A673 (cell line): ENCODE measurements at regions of chr6 and their contacts with region 1.

Region 1: GRCh38 chr6:108665495-108666196 is 104.9 kb downstream of the FOXO3 start:
- DNase-seq: no peak
- H3K4me3 ChIP-seq: no peak overlapping the region
- H3K27ac ChIP-seq: no peak overlapping the region
- H3K4me1 ChIP-seq: no peaks in the 10 kb centered on the region
- H3K27me3 ChIP-seq: no peaks in the 10 kb centered on the region
- CTCF ChIP-seq: no peak

Region 2: DNA sequence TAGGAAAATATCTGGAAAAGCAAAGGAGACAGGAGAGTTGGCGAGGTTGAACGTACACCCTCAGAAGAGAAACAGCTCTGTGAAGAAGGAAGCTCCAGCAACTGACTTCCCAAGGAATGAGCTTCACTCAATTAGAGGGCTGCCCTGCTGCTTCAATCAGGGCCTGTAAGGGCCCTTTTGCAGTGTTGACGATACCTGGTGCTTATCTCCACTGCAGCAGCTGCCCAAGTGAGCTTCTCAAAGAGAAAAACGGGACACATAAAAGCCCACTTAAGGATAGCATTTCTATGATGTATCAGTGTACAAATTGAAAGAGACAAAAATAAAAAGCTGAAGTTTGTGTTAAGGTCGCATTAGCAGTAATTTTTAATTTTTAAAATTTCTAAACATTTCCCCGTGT is 724.0 kb before region 1 on chr6:
- CTCF ChIA-PET with region 1: no interaction called
- POLR2A ChIA-PET with region 1: no interaction called
- intact Hi-C with region 1: no loop called
- DNase-seq: no peak
- H3K4me3 ChIP-seq: no peak overlapping the region
- H3K27ac ChIP-seq: no peak overlapping the region
- H3K4me1 ChIP-seq: no peaks in the 10 kb centered on the region
- H3K27me3 ChIP-seq: no peaks in the 10 kb centered on the region
- CTCF ChIP-seq: no peak

Region 3: DNA sequence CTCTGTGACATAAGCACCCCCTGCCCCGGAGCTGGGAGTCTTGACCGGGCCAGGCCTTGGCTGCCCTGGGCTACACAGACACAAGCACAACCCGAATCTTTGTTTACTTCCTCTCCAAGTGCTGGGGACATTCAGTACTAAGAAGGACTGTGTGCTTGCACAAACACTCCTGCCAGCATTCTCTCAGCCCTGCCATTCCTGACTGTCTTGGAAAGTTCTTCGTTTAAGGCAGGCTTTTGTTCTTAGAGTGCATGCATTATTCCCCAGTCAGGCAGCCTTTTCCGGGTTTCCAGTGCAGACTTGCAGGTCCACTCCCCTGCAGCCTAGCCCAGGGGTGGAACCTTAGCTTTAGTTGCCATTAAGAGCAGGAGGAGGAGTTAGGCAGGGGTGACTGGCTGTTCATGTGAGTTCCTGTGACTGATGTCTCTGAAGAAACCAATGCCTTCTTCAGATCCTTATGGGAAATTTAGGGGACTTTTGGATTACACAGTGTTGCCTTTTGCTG is 76.3 kb before region 1 on chr6:
- CTCF ChIA-PET with region 1: no interaction called
- POLR2A ChIA-PET with region 1: interaction called, 18 read pairs
- intact Hi-C with region 1: no loop called
- DNase-seq: peak; percentile 61
- H3K4me3 ChIP-seq: no peak overlapping the region
- H3K27ac ChIP-seq: peak overlapping the region; percentile 35
- H3K4me1 ChIP-seq: peaks cover 17% of the 10 kb centered on the region
- H3K27me3 ChIP-seq: no peaks in the 10 kb centered on the region
- CTCF ChIP-seq: no peak